ENCODE measurements at regions of chr7 and their contacts with region 1.

Region 1: DNA sequence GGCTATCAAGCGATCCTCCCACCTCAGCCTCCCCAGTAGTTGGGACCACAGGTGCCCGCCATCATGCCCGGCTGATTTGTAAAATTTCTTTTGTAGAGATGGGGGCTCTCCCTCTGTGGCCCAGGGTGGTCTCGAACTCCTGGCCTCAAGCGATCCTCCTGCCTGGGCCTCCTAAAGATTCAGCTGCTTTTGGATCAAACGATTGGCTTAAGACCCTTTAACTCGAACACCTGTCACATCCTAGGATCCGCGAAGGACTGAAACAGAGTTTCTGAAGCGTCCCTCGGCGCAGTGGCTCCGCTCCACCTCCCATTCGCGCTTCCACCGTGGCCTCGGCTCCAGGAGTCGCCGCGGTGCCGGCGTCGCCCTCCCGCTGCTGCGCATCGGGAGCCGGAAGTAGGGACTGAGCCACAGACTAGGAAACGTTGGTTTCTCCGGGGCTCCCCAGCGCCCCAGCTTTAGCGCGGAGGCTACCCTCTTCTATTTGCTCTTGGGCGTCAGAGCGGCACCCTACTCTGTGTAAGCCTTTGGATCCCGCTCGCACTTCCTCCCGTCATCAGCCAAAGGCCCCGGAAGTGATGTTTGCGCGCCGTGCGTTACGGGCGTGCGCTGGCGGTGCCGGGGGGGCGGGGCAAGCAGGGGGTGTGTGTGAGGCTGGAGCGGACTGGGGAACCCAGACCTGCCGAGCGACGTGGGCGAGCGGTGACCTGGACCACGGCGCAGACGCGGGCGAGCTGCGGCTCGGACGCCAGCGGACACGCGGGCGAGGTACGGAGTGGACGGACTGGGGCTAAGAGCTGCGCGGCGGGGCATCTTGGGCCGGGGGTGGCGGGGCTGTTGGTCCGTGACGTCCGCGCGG is 53.0 kb downstream of the KCTD7 start:
- DNase-seq: peak; percentile 99

Region 2: GRCh38 chr7:66654123-66654732 is 27.5 kb before region 1 on chr7:
- intact Hi-C with region 1: loop called (anchors 2 kb)
- DNase-seq: peak; percentile 99

Region 3: DNA sequence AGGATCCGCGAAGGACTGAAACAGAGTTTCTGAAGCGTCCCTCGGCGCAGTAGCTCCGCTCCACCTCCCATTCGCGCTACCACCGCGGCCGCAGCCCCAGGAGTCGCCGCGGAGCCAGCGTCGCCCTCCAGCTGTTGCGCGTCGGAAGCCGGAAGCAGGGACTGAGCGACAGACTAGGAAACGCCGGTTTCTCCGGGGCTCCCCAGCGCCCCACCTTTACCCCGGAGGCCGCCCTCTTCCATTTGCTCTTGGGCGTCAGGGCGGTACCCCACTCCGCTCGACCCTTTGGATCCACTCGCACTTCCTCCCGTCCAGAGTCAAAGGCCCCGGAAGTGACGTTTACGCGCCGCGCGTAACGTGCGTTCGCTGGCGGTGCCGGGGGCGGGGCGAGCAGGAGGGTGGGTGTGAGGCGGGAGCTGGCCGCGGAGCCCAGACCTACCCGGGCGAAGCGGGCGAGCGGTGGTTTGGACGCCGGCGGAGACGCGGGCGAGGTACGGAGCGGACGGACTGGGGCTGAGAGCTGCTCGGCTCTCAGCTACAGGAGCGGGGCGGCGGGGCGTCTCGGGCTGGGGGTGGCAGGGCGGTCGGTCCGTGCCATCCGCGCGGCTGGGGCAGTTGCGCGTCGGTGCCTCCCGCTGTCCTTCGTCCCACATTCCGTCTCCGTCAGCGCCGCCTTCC is 58.7 kb after region 1 on chr7 and contains the start of gene RABGEF1:
- intact Hi-C with region 1: loop called (anchors 5 kb)
- DNase-seq: peak; percentile 99
- total RNA-seq, gene RABGEF1: 19.1 TPM